Activated CD4-positive, alpha-beta memory T cell treated with anti-CD3 and anti-CD28 coated beads for 36 hours (primary cell): ENCODE measurements at regions of chr16 and their contacts with region 1.

Region 1: GRCh38 chr16:28291873-28292660 is at the start of gene SBK1:
- DNase-seq: peak; percentile 85
- H3K4me3 Mint-ChIP-seq: peak within 1 kb of the TSS; percentile 82
- H3K27ac Mint-ChIP-seq: peak within 1 kb of the TSS; percentile 82
- H3K4me1 Mint-ChIP-seq: peaks cover 44% of the 10 kb centered on the region
- H3K27me3 Mint-ChIP-seq: no peaks in the 10 kb centered on the region
- total RNA-seq, gene SBK1: 2.9 to 3.8 TPM

Region 2: DNA sequence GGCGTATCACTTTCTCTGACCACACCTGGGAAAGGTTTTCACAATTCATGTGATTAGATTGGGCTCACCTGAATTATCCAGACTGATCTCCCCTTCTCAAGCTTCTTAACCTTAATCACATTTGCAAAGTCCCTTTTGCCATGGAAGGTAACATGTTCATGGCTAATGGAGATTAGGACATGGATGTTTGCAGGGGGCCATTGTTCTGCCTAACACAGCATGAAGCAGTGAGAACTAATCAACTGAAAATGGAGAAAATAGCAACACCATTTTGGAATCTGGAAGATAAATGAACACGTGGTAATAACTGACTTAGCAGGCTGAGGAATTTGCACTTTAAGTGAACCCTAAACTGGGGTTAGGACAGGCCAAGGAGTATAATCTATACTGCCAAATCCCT is 24.7 kb before region 1 on chr16:
- CTCF ChIA-PET with region 1: no interaction called
- POLR2A ChIA-PET with region 1: no interaction called
- intact Hi-C with region 1: no loop called
- DNase-seq: no peak
- H3K4me3 Mint-ChIP-seq: no peak overlapping the region
- H3K27ac Mint-ChIP-seq: no peak overlapping the region
- H3K4me1 Mint-ChIP-seq: peaks cover 6% of the 10 kb centered on the region
- H3K27me3 Mint-ChIP-seq: peaks cover 8% of the 10 kb centered on the region

Region 3: DNA sequence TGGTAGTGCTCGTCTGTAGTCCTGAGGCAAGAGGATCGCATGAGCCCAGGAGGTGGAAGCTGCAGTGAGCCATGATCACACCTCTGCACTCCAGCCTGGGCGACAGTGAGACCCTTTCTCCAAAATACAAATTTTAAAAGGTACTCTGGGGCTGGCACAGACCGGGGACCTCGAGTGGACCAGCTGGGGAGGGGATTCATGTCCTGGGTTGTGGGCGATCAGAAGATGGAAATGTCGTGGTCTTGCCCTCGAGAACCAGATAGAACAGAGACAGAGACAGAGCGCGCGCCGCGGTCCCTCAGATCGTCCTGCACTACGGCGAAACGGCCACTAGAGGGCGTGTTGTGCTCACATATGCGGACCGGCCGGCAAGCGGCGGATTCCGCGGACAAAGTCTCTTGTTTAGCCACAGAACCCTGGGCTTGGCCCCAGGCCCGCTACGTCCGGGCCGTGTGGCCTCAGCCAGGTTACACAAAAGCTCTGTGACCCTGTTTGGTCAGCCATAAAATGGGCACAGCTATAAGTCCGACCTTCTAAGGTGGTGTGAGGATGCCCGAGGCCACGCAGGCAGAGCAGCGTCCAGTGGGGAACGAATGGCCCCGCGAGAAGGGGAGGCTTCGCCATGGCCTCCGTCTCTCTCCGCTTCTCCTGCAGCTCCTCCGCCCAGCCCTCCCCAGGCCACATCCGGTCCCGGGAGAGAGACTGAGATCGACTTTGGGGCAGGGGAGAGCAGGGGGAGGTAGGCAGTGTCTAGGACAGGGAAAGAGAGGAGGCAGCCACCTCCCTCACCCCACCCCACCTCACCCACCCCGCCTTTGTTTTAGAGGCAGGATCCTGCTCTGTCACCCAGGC is 14.3 kb before region 1 on chr16:
- CTCF ChIA-PET with region 1: interaction called, 12 read pairs
- POLR2A ChIA-PET with region 1: interaction called, 6 read pairs
- intact Hi-C with region 1: loop called (anchors 2 kb)
- DNase-seq: peak; percentile 89
- H3K4me3 Mint-ChIP-seq: peak overlapping the region; percentile 57
- H3K27ac Mint-ChIP-seq: no peak overlapping the region
- H3K4me1 Mint-ChIP-seq: peaks cover 25% of the 10 kb centered on the region
- H3K27me3 Mint-ChIP-seq: peaks cover 6% of the 10 kb centered on the region

Region 4: DNA sequence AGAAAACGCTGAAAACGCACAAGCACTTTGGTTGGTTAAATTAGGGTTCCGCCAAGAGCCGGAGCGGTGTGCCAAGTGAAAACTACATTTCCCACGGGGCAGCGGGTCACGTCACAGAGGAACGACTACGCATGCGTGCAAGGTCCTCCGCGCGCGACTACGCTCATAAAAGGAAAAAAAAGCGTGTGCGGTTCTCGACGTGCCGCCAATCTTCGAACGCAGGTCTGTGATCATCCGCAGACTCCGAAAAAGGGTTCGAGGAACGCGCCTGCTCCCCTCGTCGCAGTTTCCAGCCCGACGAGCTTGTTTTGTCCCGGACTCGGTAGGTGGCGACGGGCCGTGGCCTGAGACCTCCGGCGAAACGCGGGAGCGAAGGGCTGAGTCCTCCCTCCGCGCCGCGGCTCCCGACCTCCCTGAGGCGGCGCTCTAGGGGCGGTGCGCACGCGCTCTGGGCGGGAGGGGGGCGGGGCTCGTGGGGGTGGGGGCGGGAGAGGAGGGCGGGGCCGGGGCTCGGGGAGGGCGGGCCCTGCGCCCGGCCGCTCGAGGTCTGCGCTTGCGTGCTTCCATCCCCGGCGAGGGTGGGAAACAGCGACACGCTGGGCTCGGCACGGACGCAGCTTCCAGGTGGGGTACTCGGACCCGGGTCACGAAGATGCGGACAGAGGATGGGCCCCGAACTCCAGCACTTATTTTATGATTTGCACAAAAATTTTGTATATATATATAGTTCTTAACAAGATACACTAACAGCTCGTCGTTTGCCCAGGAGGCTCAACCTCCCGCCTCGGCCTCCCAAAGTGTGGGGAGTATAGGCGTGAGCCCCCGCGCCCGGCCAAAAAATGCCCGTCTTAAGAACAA is 261.9 kb after region 1 on chr16 and contains the start of gene SGF29:
- CTCF ChIA-PET with region 1: no interaction called
- POLR2A ChIA-PET with region 1: no interaction called
- intact Hi-C with region 1: loop called (anchors 10 kb)
- DNase-seq: peak; percentile 96
- H3K4me3 Mint-ChIP-seq: peak within 1 kb of the TSS; percentile 93
- H3K27ac Mint-ChIP-seq: peak within 1 kb of the TSS; percentile 98
- H3K4me1 Mint-ChIP-seq: peaks cover 28% of the 10 kb centered on the region
- H3K27me3 Mint-ChIP-seq: peaks cover 3% of the 10 kb centered on the region
- total RNA-seq, gene SGF29: 17.8 to 18.5 TPM